Esophagus squamous epithelium (tissue), 5 donors: ENCODE measurements at regions of chr1 and their contacts with region 1.

Region 1: DNA sequence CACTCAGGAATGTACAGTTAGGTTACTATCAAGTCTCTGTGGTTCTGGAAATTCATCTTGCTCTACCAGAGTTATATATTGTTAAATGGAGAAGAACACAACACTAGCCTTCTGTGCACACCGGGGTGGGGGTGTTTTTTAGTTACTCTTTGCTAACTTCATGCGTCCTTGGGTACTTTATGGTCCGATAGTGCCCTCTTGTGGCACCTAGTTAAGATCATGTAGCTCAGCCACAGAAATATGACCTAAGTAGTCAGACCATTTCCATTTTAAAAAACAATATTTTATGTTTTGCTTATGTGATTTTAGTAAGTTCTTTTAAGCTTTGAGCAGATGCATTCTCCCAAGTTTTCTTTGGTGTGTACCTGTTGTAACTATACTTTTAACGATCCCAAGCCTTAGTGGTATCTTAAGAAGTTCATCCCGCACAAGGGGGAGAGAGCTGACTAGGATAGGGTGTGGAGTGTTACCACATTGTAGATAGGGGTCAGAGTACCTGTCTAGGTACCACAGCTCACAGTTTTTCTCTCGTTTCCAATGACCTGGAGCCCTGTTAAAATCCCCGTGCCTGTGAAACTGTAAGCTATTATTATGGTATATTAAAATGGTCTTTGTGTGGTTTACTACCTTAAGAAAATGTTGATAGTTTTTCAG is 20.6 kb upstream of the SH3D21 start:
- DNase-seq: no peak
- H3K4me3 ChIP-seq: no peak overlapping the region
- H3K27ac ChIP-seq: peak overlapping the region in 2 of 4 donors; percentile 31 to 39
- H3K4me1 ChIP-seq: peaks cover 0 to 43% (median 0%) of the 10 kb centered on the region in 3 donors
- H3K27me3 ChIP-seq: no peaks in the 10 kb centered on the region
- CTCF ChIP-seq: peak; percentile 27 to 77 (median 72)
- POLR2A ChIP-seq: no peak

Region 2: DNA sequence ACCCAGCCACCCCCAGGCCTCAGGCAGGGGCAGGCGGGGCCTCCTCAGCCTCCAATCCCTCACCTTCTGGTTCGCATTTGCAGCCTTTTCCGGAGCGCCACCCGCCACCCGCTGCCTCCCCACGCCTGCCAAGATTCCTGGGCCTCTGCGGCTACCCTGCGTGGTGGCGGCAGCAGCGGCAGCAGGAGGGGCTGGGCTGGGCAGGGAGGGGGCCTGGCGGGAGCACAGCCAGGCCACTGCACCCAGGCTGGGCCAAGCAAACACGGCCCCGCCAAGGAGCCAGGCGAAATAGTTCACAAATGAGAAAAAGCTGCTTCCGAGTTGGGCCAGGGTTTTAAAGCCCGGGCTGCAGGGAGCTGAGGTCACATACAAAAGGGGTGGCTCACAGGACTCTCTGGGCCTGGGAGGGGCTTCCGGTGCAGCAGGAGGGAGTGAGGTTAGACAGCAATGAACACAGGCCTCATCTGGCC is 170.3 kb before region 1 on chr1:
- intact Hi-C with region 1: loop called (anchors 10 kb)
- DNase-seq: no peak
- H3K4me3 ChIP-seq: peak overlapping the region in 1 of 4 donors; percentile 2
- H3K27ac ChIP-seq: peak overlapping the region; percentile 15 to 83 (median 70)
- H3K4me1 ChIP-seq: peaks cover 0 to 35% (median 10%) of the 10 kb centered on the region in 3 donors
- H3K27me3 ChIP-seq: no peaks in the 10 kb centered on the region
- CTCF ChIP-seq: no peak
- POLR2A ChIP-seq: no peak